ENCODE measurements at regions of chr12 and their contacts with region 1.

Region 1: DNA sequence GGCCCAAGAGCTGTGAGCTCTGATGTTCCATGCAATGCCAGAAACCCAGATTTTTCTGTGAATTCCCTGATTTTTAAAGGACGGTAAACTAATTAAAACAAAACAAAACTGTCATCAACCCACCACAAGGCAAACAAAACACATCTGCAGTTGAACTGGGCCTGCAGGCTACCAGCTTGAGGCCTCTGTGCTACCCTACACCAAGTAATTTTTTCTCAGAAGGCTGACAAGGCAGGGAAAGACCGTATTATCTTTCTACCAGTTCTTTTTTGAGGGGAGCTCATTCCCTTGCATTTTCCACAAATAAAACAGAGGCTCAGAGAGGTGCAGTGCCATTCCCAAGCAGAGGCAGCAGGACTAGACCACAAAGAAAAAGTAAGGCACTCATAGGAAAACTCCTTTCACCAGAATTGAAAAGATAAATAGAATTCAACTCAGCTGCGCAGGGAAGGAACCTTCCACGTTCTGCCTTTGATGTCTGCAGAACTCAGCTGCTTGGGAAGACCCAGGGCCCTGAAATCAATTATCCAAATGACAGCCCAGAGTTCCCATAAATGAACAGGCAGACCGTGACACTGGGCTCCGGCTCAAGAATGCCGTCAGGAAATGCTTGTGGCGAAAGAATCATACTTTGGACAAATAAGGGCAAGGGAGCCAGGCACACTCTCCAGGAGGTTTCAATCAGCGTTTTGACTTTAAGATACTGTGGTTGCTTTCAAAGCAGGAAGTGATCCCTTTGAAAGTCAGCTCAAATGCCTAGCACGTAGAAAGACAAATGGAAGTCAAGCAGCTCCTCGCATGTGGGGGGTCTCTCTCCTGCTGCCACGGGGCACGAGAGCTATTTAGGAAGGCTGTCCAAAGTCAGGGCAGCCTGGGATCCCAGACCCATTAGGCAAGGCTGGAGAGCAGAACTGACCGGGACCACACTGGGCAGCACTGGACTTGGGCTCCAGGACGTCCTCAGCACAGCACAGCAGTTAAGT is 14.1 kb downstream of the KCTD10 start:
- DNase-seq: peak; percentile 71 to 88
- ATAC-seq: peak; percentile 70 to 86 (median 82)
- H3K4me3 ChIP-seq: peak overlapping the region in 7 of 10 donors; percentile 10 to 31 (median 18)
- H3K27ac ChIP-seq: peak overlapping the region; percentile 87 to 99 (median 98)
- H3K4me1 ChIP-seq: peaks cover 43 to 100% (median 100%) of the 10 kb centered on the region in 9 donors
- H3K27me3 ChIP-seq: no peaks in the 10 kb centered on the region
- CTCF ChIP-seq: no peak

Region 2: DNA sequence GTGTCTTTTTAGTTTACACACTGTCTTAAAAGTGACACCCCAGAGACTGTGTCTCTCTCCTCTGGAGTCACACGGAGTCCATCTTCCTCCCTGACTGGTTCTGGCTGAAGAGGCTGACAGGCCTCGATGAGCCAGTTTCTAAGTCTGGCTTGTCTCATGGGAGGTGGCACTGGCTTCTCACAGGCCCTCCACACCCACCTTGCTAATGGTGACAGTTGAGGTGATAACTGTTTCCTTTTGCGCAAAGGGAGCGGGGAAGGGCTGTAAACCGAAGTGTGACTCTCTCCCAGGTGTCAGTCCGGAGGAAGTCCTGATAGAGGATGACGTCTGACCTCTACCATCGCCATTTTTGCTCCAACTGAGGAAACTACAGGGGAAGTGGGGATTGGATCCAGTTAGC is 16.1 kb before region 1 on chr12:
- intact Hi-C with region 1: loop called in 1 of 10 experiments (anchors 2 kb)
- DNase-seq: no peak
- ATAC-seq: peak; percentile 27 to 86 (median 74)
- H3K4me3 ChIP-seq: no peak overlapping the region
- H3K27ac ChIP-seq: peak overlapping the region in 9 of 10 donors; percentile 0 to 72 (median 37)
- H3K4me1 ChIP-seq: peaks cover 3 to 38% (median 22%) of the 10 kb centered on the region in 9 donors
- H3K27me3 ChIP-seq: no peaks in the 10 kb centered on the region
- CTCF ChIP-seq: no peak

Region 3: DNA sequence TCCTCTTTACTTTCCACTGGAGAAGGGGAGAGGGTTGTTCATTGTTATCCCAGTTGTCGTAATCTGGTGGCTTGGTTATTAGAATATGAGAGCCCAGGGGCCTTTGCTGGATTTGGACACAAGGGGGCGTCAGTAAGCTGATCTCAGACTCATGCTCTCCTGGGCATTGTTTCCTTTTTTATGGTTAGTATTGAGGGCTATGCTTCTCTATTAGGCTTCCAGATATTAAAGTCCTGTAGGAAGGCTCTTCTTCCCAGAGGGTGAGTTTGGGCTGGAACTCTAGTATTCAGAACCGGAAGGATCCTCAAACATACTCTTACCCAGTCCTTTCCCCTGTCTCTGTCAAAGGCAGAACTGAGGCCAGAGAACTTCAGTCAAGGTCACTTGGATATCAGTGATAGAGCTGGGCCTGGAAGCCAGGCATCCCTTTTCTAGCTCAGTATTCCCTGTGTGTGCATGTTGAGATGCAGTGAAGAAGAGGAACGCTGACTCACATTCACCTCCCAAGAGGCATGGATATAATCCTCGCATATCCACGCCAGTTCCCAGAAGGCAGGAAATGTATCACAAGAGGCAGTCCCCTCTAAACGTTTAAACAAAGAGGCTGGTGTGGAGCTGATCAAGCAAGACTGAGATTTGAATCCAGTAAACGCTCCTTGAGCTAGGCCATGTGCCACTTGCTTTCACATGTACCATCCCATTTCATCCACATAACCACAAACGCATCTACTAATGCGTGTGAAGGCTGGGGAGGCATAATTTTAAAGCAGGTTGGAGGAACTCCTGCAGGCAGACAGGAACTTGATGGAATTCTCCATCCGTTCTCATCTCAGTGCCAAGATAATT is 56.0 kb after region 1 on chr12:
- intact Hi-C with region 1: no loop called
- DNase-seq: peak; percentile 61 to 76
- ATAC-seq: peak in 7 of 8 donors; percentile 29 to 83 (median 69)
- H3K4me3 ChIP-seq: no peak overlapping the region
- H3K27ac ChIP-seq: peak overlapping the region in 9 of 10 donors; percentile 62 to 93 (median 82)
- H3K4me1 ChIP-seq: peaks cover 9 to 56% (median 37%) of the 10 kb centered on the region in 9 donors
- H3K27me3 ChIP-seq: no peaks in the 10 kb centered on the region
- CTCF ChIP-seq: peak; percentile 76 to 92 (median 90)

Region 4: GRCh38 chr12:109739747-109740693 is 277.0 kb after region 1 on chr12:
- intact Hi-C with region 1: no loop called
- DNase-seq: peak in 1 of 2 donors; percentile 7
- ATAC-seq: peak in 2 of 8 donors; percentile 25 to 28
- H3K4me3 ChIP-seq: no peak overlapping the region
- H3K27ac ChIP-seq: no peak overlapping the region
- H3K4me1 ChIP-seq: peaks cover 0 to 28% (median 17%) of the 10 kb centered on the region in 9 donors
- H3K27me3 ChIP-seq: peaks cover 0 to 1% (median 0%) of the 10 kb centered on the region in 7 donors
- CTCF ChIP-seq: peak in 6 of 9 donors; percentile 17 to 43 (median 32)

Region 5: DNA sequence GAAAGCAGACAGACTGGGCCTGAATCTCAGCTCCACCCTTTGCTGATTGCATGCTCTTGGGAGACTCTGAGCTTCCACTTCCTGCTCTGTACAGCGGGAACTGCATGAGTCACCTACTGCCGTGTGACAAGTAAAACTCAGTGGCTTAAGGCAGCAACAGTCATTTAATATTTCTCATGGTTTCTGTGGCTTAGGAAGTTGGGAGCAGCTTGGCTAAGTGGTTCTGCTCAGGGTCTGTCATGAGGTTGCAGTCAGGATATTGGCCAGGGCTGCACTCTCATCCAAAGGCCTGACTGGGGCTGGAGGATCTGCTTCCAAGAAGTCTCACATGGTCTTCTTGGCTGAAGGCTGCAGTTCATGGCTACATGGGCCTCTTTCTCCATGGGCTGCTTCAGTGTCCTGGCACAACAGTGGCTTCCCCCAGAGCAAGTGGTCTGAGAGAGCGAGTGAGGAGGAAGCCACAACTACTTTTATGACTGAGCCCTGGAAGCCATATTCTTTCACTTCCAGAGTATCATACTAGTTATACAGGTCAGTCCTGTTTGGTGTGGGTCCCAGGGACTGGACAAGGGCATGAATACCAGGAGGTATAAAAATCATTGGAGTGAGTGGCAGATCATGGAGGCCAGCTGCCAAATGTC is 300.3 kb after region 1 on chr12:
- intact Hi-C with region 1: no loop called
- DNase-seq: no peak
- ATAC-seq: no peak
- H3K4me3 ChIP-seq: no peak overlapping the region
- H3K27ac ChIP-seq: no peak overlapping the region
- H3K4me1 ChIP-seq: peaks cover 0 to 18% (median 14%) of the 10 kb centered on the region in 9 donors
- H3K27me3 ChIP-seq: no peaks in the 10 kb centered on the region
- CTCF ChIP-seq: no peak

Measured in heart right ventricle (tissue), 16 donors.